Mammary epithelial cell (primary cell): ENCODE measurements at regions of chr3 and their contacts with region 1.

Region 1: GRCh38 chr3:169149349-169149890 is 514.1 kb downstream of the MECOM start:
- DNase-seq: peak; percentile 81
- H3K4me3 ChIP-seq: peak overlapping the region; percentile 45 to 55 (median 54)
- H3K27ac ChIP-seq: peak overlapping the region; percentile 30
- H3K4me1 ChIP-seq: peaks cover 15% of the 10 kb centered on the region
- H3K27me3 ChIP-seq: no peaks in the 10 kb centered on the region
- CTCF ChIP-seq: peak; percentile 70 to 85

Region 2: DNA sequence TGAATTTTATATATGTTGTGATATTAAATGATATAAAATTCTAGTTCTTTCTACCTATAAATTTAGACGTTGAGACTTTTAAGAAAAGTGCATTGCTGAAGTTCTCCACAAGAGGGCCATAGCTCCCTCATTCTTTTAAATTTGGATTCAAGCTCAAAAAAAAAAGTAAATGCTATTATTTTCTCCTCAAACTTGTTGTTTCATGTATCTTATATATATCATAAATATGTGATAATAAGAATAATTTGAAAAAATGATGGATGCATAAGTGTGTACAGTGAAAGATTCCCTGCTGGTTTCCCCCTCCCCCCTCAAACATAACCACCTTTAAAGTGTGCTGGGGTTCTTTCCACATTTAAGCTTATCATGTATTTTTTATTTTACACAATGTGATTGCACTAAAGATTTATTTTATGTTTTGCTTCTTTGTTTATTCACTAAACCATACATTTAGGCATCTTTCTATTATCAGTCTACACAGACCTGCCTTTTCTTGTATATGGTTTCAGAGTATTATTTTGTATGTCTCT is 284.3 kb before region 1 on chr3:
- CTCF ChIA-PET with region 1: interaction called, 15 read pairs
- dilution Hi-C with region 1: no loop called
- in situ Hi-C with region 1: no loop called
- intact Hi-C with region 1: no loop called
- DNase-seq: no peak
- H3K4me3 ChIP-seq: no peak overlapping the region
- H3K27ac ChIP-seq: no peak overlapping the region
- H3K4me1 ChIP-seq: no peaks in the 10 kb centered on the region
- H3K27me3 ChIP-seq: no peaks in the 10 kb centered on the region
- CTCF ChIP-seq: peak; percentile 77 to 81

Region 3: GRCh38 chr3:168952551-168952950 is 196.9 kb before region 1 on chr3:
- CTCF ChIA-PET with region 1: interaction called, 7 read pairs
- dilution Hi-C with region 1: no loop called
- in situ Hi-C with region 1: no loop called
- intact Hi-C with region 1: loop called (anchors 1 kb)
- DNase-seq: peak; percentile 37
- H3K4me3 ChIP-seq: no peak overlapping the region
- H3K27ac ChIP-seq: peak overlapping the region; percentile 60
- H3K4me1 ChIP-seq: peaks cover 25% of the 10 kb centered on the region
- H3K27me3 ChIP-seq: no peaks in the 10 kb centered on the region
- CTCF ChIP-seq: peak; percentile 17 to 32

Region 4: DNA sequence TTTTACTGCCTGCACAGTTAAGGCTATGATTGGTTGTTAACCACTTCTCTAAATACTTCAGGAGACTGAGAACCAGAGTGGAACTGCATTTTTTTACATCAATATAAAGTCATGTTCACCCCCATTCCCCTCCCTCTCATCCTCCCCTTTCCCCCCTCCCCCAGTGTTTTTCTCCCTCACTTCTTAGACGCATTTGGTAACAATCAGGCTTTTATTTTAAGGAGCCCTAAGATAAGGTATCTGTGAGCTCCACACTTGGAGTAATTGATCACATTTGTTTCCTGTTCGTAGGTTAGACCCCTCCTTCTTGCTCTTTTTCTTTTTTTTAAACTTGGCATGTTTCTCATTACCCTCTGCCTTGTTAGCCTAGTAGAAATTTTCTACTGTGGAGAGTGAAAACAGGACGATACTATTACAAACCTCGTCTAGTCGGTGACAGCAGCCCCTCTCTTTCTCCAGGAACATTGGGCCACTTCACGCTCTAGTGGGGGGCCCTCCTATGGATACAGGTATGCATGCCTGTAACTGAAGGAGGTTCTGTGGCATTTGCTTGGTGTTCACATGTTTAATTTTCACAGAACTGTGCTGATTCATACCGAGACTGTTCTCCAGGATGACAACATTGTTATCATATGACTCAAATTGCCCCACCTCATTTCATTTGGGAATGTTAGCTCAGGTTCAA is 199.7 kb after region 1 on chr3:
- CTCF ChIA-PET with region 1: interaction called, 4 read pairs
- dilution Hi-C with region 1: no loop called
- in situ Hi-C with region 1: no loop called
- intact Hi-C with region 1: loop called (anchors 1 kb)
- DNase-seq: peak; percentile 92
- H3K4me3 ChIP-seq: no peak overlapping the region
- H3K27ac ChIP-seq: peak overlapping the region; percentile 85
- H3K4me1 ChIP-seq: peaks cover 36% of the 10 kb centered on the region
- H3K27me3 ChIP-seq: no peaks in the 10 kb centered on the region
- CTCF ChIP-seq: no peak

Region 5: DNA sequence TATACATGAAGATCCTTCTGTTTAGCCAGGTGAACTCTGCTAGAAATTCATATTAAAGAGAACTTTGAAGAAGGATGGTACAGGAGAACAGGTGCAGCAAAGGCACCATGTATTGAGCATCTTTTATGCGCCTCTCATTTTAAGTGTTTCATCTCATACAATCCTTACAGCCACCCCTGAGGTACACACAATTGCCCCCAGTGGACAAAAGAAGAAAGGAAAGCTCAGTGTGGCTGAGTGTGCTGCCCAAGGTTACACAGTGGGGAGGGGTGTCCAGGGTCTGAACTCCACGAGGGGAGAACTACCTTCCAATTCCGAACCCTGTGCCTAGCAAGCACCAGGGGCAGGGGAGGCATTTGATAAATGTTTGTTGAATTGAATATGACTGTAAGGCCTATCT is 415.5 kb after region 1 on chr3:
- CTCF ChIA-PET with region 1: interaction called, 5 read pairs
- dilution Hi-C with region 1: no loop called
- in situ Hi-C with region 1: no loop called
- intact Hi-C with region 1: loop called (anchors 10 kb)
- DNase-seq: no peak
- H3K4me3 ChIP-seq: no peak overlapping the region
- H3K27ac ChIP-seq: no peak overlapping the region
- H3K4me1 ChIP-seq: no peaks in the 10 kb centered on the region
- H3K27me3 ChIP-seq: no peaks in the 10 kb centered on the region
- CTCF ChIP-seq: peak in 1 of 2 donors; percentile 14

Region 6: DNA sequence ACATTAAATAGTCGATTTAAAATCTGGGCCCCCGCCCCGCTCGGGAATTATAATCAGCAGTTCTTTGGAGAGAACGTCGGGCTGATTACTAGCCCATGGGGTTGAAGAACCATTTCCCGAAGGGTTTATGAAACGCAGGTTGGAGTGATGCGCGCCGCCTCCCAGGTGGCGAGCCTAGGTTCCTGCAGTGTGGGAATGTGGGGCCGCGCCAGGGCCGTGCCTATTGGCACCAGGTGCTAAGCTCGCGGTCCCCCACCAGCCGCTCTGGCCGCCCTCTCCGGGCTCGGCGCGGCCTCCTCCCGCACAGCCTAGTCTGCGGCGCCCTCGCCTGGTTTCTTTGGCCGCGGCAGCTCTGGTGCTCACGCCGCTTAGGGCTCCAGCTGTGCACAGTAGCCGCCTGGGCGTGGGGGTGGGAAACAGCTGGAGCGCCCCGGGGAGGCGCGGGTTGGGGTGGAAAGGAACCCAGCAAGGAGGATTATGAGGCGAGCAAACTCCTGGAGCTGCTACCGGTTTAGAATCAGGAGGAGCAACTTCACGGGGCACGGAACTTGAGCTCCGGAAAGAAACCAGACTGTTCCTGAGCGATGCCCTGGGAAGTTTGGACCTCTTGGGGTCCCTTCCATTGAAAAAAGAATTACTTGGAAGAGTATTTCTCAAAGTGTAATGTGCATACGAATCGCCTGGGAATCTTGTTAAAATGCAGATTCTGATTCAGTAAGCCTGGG is 519.7 kb after region 1 on chr3:
- CTCF ChIA-PET with region 1: interaction called, 16 read pairs
- dilution Hi-C with region 1: no loop called
- in situ Hi-C with region 1: loop called in 1 of 2 experiments (anchors 10 kb)
- intact Hi-C with region 1: loop called (anchors 1 kb)
- DNase-seq: peak; percentile 67
- H3K4me3 ChIP-seq: peak overlapping the region; percentile 41 to 46 (median 43)
- H3K27ac ChIP-seq: no peak overlapping the region
- H3K4me1 ChIP-seq: peaks cover 12% of the 10 kb centered on the region
- H3K27me3 ChIP-seq: peaks cover 50% of the 10 kb centered on the region
- CTCF ChIP-seq: peak; percentile 37 to 88